Activated T-helper 1 cell treated with anti-CD3 and anti-CD28 coated beads, Interleukin-12 subunit alpha, Interleukin-12 subunit beta, Interleukin-2, Interleukin-4 antibody, amounts not matched to agents 30 ng/mL and 10 ng/mL and 1 ng/mL, durations not matched to agents 14 hours and 24 hours and 36 hours (primary cell): ENCODE measurements at regions of chr9 and their contacts with region 1.

Region 1: GRCh38 chr9:113511856-113512761 is 48.6 kb downstream of the RGS3 start:
- DNase-seq: peak; percentile 57
- H3K4me3 Mint-ChIP-seq: peak overlapping the region; percentile 62
- H3K27ac Mint-ChIP-seq: peak overlapping the region; percentile 90
- H3K4me1 Mint-ChIP-seq: peaks cover 76% of the 10 kb centered on the region
- H3K27me3 Mint-ChIP-seq: peaks cover 3% of the 10 kb centered on the region

Region 2: DNA sequence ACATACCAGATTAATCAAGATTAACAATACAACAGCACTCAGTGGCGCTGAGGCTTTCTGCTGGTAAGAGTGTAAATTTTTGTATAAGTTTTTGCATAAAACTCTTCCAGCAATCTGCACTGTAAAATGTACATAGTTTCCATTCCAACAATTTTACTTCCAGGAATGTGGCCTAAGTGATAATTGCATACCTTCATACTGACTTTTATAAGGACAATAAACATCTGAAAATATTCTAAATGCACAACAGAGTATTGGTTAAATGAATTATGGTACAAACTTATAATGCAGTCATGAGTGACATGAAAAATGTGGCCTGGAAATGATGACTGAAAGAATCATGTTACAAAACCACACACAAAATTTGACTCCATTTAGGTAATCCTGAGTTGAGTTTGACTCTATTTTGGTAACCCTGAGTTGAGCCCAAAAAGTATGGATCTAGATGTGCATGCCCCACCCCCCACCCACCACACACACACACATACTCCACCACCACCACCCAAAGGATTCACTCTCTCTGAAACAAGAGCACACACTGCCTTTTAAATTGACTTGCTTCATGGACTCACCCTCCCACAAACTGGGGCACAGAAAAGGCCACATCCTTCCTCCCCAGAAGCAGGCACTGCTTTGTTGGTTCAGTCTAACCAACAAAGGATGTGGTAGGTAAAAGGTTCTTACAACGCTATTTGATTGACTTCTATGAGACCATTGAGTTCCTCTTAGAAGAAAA is 1474.7 kb before region 1 on chr9:
- intact Hi-C with region 1: loop called (anchors 10 kb)
- DNase-seq: peak; percentile 74
- H3K4me3 Mint-ChIP-seq: peak overlapping the region; percentile 43
- H3K27ac Mint-ChIP-seq: peak overlapping the region; percentile 82
- H3K4me1 Mint-ChIP-seq: peaks cover 53% of the 10 kb centered on the region
- H3K27me3 Mint-ChIP-seq: peaks cover 16% of the 10 kb centered on the region

Region 3: DNA sequence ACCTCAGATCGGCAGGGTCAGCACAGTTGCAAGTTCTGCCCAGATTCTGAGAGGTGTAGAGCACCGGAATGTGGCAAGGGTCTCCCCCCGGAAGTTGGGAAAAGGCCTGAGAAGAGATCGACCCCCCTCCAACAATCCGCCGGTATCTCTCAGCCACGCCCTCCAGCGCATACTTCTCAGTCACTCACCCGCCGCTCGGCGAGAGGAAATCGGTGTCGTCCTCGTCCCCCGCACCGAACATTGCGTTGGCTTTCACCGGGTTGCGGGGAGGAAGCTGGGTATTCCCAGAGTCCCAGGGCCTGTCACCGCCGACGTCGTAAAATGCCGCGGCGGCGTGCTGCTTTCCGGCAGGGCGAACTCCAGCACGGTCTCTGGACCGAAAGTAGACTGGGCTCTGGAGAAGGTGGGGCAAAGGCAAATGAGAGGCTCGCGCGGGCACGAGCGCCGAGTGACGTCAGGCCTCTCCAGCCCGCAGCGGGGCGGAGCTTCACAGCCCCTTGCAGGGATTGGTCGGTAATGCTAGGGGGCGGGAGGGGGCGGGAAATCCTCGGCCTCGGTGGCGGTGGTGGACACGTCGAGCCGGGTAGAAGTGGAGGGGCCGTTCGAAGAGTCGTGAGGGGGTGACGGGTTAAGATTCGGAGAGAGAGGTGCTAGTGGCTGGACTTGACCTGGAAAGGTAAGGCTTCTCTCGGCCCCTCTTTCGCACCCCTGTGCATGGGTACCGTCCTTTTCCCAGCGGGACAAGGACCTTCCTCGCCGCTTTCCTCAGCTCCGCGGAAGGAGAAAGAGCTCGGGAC is 290.9 kb before region 1 on chr9 and contains the starts of genes FKBP15 and SLC31A1:
- intact Hi-C with region 1: loop called (anchors 1 kb)
- DNase-seq: peak; percentile 96
- H3K4me3 Mint-ChIP-seq: peak within 1 kb of the TSS; percentile 98
- H3K27ac Mint-ChIP-seq: peak within 1 kb of the TSS; percentile 97
- H3K4me1 Mint-ChIP-seq: peaks cover 64% of the 10 kb centered on the region
- H3K27me3 Mint-ChIP-seq: no peaks in the 10 kb centered on the region
- total RNA-seq, gene FKBP15: 34.9 and 35.8 TPM in 2 replicates
- total RNA-seq, gene SLC31A1: 16.1 and 17.6 TPM in 2 replicates

Region 4: DNA sequence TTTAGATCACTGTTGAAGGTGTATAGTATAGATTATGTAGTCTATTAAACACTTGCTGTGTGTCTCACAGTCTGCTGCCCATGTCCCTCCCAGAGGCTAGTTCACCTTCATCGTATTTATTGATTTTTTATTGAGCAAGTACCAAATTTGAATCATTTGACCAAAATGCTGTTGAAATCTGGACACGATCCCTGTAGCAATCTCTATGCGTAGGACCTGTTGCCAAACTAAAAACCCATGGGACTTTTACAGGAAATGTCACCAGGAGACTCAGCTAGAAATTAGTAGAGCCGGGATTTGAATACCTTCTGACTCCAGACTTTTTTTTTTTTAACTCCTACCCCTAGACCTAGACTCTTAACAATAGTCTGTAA is 273.3 kb before region 1 on chr9:
- intact Hi-C with region 1: no loop called
- DNase-seq: no peak
- H3K4me3 Mint-ChIP-seq: no peak overlapping the region
- H3K27ac Mint-ChIP-seq: no peak overlapping the region
- H3K4me1 Mint-ChIP-seq: peaks cover 11% of the 10 kb centered on the region
- H3K27me3 Mint-ChIP-seq: no peaks in the 10 kb centered on the region

Region 5: DNA sequence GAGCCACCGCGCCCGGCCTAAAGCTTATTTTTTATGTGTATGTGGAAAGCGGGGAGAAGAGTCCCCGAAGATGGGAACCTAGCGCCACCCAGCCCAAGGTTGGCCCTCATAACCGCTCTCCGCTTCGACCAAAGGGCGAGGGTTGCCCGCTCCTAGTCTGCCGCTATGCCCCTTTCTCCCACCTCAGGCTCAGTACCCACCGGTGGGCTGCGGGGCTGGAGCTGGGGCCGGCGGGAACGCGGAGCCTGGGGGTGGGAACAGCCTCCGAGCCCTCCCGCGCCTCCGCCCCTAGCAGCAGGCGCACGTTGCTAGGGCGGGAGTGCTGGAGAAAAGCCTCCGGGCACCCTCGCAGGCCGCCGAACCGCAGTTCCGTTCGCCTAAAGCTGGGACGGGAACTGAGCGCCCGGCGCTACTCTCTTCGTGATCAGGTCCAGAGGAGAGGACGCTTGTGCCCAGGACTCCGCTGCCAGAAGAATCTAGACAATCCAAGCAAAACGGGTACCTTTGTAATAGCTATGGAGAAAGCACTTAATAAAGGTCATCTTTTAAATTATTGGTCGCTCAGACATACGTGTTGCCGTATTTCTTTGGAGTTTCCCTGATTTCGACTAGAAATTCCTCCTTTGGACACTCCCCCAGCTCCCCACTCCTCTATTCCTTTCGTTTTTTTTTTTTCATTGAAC is 172.0 kb before region 1 on chr9 and contains the start of gene WDR31:
- intact Hi-C with region 1: loop called (anchors 2 kb)
- DNase-seq: peak; percentile 78
- H3K4me3 Mint-ChIP-seq: peak within 1 kb of the TSS; percentile 80
- H3K27ac Mint-ChIP-seq: peak within 1 kb of the TSS; percentile 89
- H3K4me1 Mint-ChIP-seq: peaks cover 49% of the 10 kb centered on the region
- H3K27me3 Mint-ChIP-seq: no peaks in the 10 kb centered on the region
- total RNA-seq, gene WDR31: 1.9 and 2.2 TPM in 2 replicates

Region 6: GRCh38 chr9:113446323-113446740 is 65.8 kb before region 1 on chr9:
- intact Hi-C with region 1: loop called (anchors 2 kb)
- DNase-seq: no peak
- H3K4me3 Mint-ChIP-seq: no peak overlapping the region
- H3K27ac Mint-ChIP-seq: peak overlapping the region; percentile 37
- H3K4me1 Mint-ChIP-seq: no peaks in the 10 kb centered on the region
- H3K27me3 Mint-ChIP-seq: no peaks in the 10 kb centered on the region

Region 7: DNA sequence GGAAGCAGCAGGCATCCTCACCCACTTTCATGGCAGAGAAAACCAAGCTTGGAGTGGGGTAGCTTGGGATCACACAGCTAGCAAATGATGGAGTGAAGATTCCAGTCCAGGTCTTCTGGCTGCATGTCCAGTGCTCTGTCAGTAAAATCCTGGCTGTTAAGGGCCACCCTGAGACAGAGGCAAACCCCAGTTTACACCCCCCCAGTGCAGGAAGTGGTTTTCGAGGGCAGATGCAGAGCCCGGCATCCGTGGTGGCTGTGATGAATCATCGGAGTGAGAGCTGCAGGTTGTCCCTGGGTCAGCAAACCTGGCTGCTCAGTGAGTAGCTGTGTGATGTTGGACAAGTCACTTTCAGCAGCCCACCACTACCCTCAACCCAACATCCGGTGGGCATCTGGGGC is 66.8 kb after region 1 on chr9:
- intact Hi-C with region 1: loop called (anchors 1 kb)
- DNase-seq: peak; percentile 83
- H3K4me3 Mint-ChIP-seq: peak overlapping the region; percentile 69
- H3K27ac Mint-ChIP-seq: peak overlapping the region; percentile 91
- H3K4me1 Mint-ChIP-seq: peaks cover 68% of the 10 kb centered on the region
- H3K27me3 Mint-ChIP-seq: no peaks in the 10 kb centered on the region

Region 8: GRCh38 chr9:114691046-114691955 is 1179.2 kb after region 1 on chr9:
- intact Hi-C with region 1: loop called (anchors 10 kb)
- DNase-seq: peak; percentile 80
- H3K4me3 Mint-ChIP-seq: peak overlapping the region; percentile 69
- H3K27ac Mint-ChIP-seq: peak overlapping the region; percentile 98
- H3K4me1 Mint-ChIP-seq: peaks cover 93% of the 10 kb centered on the region
- H3K27me3 Mint-ChIP-seq: no peaks in the 10 kb centered on the region